HCT116 (cell line): ENCODE measurements at regions of chr17 and their contacts with region 1.

Region 1: GRCh38 chr17:39410279-39410678 is 8.9 kb upstream of the FBXL20 start:
- DNase-seq: no peak
- ATAC-seq: no peak
- H3K4me3 ChIP-seq: no peak overlapping the region
- H3K27ac ChIP-seq: no peak overlapping the region
- H3K4me1 ChIP-seq: no peaks in the 10 kb centered on the region
- H3K27me3 ChIP-seq: no peaks in the 10 kb centered on the region
- CTCF ChIP-seq: no peak
- POLR2A ChIP-seq: no peak
- RAD21 ChIP-seq: no peak

Region 2: DNA sequence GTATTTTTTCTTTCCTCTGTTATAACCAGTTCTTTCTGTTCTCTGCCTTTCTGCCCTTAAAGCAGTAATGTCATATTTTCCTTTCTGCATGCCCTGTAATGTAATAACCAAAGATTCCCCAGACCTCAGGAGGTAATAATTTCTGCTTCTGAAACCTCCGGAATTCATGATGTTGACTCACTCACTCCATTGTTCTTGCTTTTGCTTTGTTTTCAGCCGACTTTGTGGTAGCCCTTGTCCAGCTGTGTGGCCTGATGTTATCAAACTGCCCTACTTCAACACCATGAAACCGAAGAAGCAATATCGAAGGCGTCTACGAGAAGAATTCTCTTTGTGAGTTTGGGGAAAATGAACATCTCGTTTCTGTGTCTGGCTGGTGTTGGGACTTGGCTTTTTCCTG is 106.9 kb after region 1 on chr17:
- CTCF ChIA-PET with region 1: no interaction called
- POLR2A ChIA-PET with region 1: no interaction called
- RAD21 ChIA-PET with region 1: no interaction called
- intact Hi-C with region 1: loop called (anchors 10 kb)
- DNase-seq: no peak
- ATAC-seq: no peak
- H3K4me3 ChIP-seq: no peak overlapping the region
- H3K27ac ChIP-seq: no peak overlapping the region
- H3K4me1 ChIP-seq: no peaks in the 10 kb centered on the region
- H3K27me3 ChIP-seq: no peaks in the 10 kb centered on the region
- CTCF ChIP-seq: no peak
- POLR2A ChIP-seq: no peak
- RAD21 ChIP-seq: no peak